ENCODE measurements at regions of chr4 and their contacts with region 1.

Region 1: DNA sequence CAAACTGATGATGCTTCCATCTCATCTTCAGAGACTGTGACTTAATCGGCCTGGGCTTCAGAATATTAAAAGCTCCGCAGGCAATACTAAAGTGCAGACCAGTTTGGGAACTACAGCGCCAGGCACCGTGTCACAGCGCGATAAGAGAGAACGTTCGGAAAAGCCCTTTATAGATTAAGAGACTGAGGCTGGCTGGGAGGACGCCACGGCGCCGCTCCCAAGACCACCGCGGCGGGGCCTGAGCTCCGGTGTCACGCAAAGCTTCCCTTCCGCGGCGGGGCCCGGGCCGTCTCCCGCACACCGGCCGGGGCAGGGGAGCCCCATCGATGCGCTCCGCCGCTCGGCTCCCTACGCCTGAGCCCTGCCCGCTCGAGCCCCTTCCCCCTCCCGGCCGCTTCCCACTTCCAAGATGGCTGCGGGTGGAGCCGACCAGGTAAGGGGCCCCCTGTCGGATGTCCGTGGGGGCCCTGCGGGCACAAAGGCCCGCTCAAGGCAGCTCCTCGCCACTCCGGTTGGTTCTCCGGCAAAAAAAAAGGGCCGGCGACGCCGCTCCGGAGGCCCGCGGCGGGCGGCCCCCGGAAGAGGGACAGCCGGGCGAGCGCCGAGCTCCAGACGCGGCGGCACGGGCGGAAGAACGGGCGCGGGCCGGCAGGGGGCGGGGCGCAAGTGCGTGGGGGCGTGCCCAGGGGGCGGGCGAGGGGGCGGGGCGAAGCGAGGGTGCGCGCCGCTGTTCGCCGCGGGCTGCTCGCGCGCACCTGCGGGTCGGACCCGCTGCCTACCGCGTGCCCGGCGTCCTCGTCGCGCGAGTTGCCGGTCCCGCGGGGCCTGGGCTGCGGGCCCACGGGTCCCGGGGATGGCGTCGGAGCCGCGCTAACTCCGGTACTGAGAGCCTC is at the start of gene TBC1D14:
- DNase-seq: peak; percentile 92
- ATAC-seq: peak; percentile 89
- H3K4me3 Mint-ChIP-seq: peak within 1 kb of the TSS; percentile 94
- H3K27ac Mint-ChIP-seq: peak within 1 kb of the TSS; percentile 90
- H3K4me1 Mint-ChIP-seq: peaks cover 44% of the 10 kb centered on the region
- H3K27me3 Mint-ChIP-seq: peaks cover 3% of the 10 kb centered on the region
- total RNA-seq, gene TBC1D14: 36.7 to 44.0 TPM

Region 2: GRCh38 chr4:6640292-6641163 is 268.8 kb before region 1 on chr4 and contains the start of gene MRFAP1:
- CTCF ChIA-PET with region 1: no interaction called
- POLR2A ChIA-PET with region 1: no interaction called
- intact Hi-C with region 1: loop called in 1 of 2 experiments (anchors 1 kb)
- DNase-seq: peak; percentile 97
- ATAC-seq: peak; percentile 86
- H3K4me3 Mint-ChIP-seq: peak within 1 kb of the TSS; percentile 96
- H3K27ac Mint-ChIP-seq: peak within 1 kb of the TSS; percentile 100
- H3K4me1 Mint-ChIP-seq: peaks cover 27% of the 10 kb centered on the region
- H3K27me3 Mint-ChIP-seq: no peaks in the 10 kb centered on the region
- total RNA-seq, gene MRFAP1: 66.8 to 122 TPM

Region 3: DNA sequence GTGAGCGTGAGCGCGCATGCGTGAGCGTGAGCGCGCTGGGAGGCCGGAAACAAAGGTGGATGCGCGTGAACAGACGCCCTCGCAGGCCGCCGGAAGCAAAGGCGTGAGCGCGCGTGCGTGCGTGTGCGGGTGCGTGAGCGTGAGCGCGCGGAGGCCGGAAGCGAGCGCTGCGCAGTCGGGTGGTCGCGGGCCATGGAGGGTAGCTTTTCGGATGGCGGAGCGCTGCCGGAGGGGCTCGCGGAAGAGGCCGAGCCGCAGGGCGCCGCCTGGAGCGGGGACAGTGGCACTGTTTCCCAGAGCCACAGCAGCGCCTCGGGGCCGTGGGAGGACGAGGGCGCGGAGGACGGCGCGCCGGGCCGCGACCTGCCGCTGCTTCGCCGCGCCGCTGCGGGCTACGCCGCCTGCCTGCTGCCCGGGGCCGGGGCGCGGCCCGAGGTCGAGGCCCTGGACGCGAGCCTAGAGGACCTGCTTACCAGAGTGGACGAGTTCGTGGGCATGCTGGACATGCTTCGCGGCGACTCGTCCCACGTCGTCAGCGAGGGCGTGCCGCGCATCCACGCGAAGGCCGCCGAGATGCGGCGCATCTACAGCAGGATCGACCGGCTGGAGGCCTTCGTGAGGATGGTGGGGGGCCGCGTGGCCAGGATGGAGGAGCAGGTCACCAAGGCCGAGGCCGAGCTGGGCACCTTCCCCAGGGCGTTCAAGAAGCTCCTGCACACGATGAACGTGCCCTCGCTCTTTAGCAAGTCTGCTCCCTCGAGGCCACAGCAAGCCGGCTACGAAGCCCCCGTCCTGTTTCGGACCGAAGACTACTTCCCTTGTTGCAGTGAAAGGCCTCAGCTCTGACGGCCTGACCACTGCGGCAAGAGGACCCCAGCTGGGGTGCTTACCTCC is 193.1 kb before region 1 on chr4 and contains the start of gene BLOC1S4:
- CTCF ChIA-PET with region 1: interaction called, 7 read pairs
- POLR2A ChIA-PET with region 1: interaction called, 3 read pairs
- intact Hi-C with region 1: loop called in 1 of 2 experiments (anchors 1 kb)
- DNase-seq: peak; percentile 93
- ATAC-seq: peak; percentile 80
- H3K4me3 Mint-ChIP-seq: peak within 1 kb of the TSS; percentile 92
- H3K27ac Mint-ChIP-seq: peak within 1 kb of the TSS; percentile 92
- H3K4me1 Mint-ChIP-seq: peaks cover 27% of the 10 kb centered on the region
- H3K27me3 Mint-ChIP-seq: no peaks in the 10 kb centered on the region
- total RNA-seq, gene BLOC1S4: 10.1 to 16.7 TPM

Region 4: DNA sequence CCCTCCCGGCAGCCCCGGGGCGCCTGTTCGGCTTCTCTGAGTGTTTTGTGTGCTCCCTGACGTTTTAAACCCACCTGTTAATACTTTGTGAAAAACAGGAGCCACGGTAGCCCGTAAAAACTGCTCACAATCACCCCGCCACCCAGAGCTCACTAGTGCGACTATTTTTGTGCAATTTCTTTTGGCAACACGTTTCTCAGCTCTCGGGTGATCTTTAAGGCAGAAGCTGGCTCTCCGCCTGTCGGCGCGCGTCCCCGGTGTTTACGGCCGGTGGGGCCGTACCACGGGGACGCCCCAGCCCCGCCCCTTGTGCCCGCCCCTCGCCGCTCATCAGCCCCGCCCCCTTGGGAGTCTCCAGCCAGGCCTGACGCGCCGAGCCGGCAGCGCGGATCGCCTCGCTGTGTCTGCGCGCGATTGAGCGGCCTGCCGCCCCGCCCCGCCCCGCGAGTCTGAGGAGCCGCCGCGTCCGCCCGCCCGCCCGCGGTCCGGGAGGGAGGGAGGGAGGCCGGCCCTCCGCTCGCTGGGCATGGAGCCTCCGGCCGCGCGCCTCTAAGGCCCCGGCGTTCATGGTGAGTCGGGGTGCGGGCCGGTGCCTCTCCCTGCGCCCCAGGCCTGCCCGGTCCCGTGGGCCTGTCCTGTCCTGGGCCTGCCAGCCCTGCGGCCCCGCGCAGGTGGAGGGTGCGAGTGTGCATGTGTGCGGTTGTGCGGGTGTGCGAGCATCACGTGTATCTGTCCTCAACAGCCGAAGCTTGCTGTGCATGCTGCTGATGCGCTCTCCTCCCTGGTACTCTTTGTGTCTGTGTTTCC is 77.7 kb after region 1 on chr4:
- CTCF ChIA-PET with region 1: interaction called, 10 read pairs
- POLR2A ChIA-PET with region 1: no interaction called
- intact Hi-C with region 1: loop called (anchors 1 kb)
- DNase-seq: peak; percentile 97
- ATAC-seq: peak; percentile 93
- H3K4me3 Mint-ChIP-seq: peak overlapping the region; percentile 96
- H3K27ac Mint-ChIP-seq: peak overlapping the region; percentile 93
- H3K4me1 Mint-ChIP-seq: peaks cover 66% of the 10 kb centered on the region
- H3K27me3 Mint-ChIP-seq: no peaks in the 10 kb centered on the region

Region 5: GRCh38 chr4:6999172-7000055 is 90.1 kb after region 1 on chr4:
- CTCF ChIA-PET with region 1: no interaction called
- POLR2A ChIA-PET with region 1: no interaction called
- intact Hi-C with region 1: no loop called
- DNase-seq: peak; percentile 49
- ATAC-seq: peak; percentile 92
- H3K4me3 Mint-ChIP-seq: no peak overlapping the region
- H3K27ac Mint-ChIP-seq: peak overlapping the region; percentile 68
- H3K4me1 Mint-ChIP-seq: peaks cover 10% of the 10 kb centered on the region
- H3K27me3 Mint-ChIP-seq: no peaks in the 10 kb centered on the region

Region 6: DNA sequence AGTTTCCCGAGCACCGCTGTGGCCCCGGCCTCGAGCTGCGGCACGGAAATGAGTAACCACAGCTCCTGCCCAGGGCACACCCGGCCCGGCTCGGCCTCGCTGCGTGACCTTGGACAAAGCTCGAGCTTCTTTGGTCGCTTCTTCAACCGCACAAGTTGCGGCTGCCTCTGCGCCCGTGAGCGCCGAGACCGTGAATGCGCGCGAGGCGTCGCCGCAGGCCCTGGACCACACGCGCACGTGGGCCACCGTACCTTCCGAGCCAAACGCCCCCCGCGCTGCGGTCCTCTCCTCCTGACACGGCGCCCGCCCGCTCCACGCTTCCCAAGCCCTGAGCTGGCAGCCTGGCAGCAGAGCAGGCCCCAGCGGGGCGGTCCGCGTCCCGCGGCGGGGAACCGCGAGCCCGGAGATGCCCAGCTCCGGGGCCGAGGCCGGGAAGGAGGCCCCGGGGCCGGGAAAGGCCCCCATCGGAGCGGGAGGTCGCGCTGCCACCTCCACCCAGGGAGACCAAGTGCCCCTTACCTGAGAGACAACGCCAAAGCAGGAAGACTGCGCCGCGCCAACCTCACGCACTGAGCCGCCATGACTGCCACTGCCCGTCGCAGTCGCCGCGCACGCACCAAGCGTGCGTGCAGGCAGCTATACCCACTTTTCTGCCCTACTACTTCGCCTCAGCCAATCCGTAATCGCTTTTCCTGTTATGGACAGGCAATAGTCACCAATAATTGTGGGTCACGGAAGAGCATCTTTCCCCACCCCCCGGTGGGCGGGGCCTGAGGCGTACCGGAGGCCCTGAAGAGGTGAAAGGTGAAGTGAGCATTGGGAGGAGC is 158.3 kb after region 1 on chr4 and contains the start of gene GRPEL1:
- CTCF ChIA-PET with region 1: interaction called, 7 read pairs
- POLR2A ChIA-PET with region 1: interaction called, 7 read pairs
- intact Hi-C with region 1: loop called (anchors 1 kb)
- DNase-seq: peak; percentile 100
- ATAC-seq: peak; percentile 94
- H3K4me3 Mint-ChIP-seq: peak within 1 kb of the TSS; percentile 94
- H3K27ac Mint-ChIP-seq: peak within 1 kb of the TSS; percentile 94
- H3K4me1 Mint-ChIP-seq: peaks cover 43% of the 10 kb centered on the region
- H3K27me3 Mint-ChIP-seq: peaks cover 2% of the 10 kb centered on the region
- total RNA-seq, gene GRPEL1: 81.0 to 93.0 TPM

Region 7: GRCh38 chr4:8158710-8159536 is 1249.6 kb after region 1 on chr4 and contains the start of gene ABLIM2:
- CTCF ChIA-PET with region 1: no interaction called
- POLR2A ChIA-PET with region 1: no interaction called
- intact Hi-C with region 1: loop called in 1 of 2 experiments (anchors 2 kb)
- DNase-seq: peak; percentile 99
- ATAC-seq: peak; percentile 99
- H3K4me3 Mint-ChIP-seq: peak within 1 kb of the TSS; percentile 95
- H3K27ac Mint-ChIP-seq: peak within 1 kb of the TSS; percentile 78
- H3K4me1 Mint-ChIP-seq: peaks cover 14% of the 10 kb centered on the region
- H3K27me3 Mint-ChIP-seq: peaks cover 7% of the 10 kb centered on the region
- total RNA-seq, gene ABLIM2: 0.58 to 0.64 TPM

Measured in activated CD4-positive, alpha-beta T cell treated with anti-CD3 and anti-CD28 coated beads for 36 hours (primary cell).